AG04449 (cell line): ENCODE measurements at regions of chr3 and their contacts with region 1.

Region 1: DNA sequence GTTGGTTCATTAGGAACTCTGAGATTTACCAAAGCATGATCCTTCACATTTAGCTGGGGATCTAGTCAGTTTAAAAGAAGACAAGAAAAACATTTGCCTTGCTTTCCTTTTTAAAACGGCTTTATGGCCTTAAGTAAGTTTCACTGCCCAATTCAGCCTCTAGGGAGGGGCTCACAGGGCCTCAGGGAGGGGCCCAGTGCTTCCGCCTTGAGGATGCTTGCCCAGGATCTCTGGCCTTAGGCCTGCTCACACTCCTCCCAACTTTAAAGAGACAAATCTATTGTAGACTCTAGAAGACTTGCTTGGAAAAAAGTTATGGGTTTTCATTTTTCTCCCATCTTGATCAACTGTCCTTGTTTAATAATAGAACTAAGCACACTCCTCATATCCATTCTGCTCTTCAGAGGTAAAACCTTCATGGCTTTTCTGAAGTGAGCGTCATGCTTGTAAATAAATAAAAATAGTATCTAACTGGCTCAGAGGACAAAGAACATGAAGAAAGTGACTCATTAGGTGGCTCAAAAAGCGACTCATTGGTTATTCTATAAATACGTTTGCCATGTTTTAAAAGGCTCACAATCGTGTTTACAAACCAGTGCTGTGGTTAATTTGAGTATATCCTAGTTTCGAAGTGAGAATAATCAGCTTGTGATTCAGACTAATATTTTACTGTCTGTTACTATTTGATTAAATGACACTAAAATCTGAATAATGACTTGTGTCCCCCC is 13.7 kb downstream of the PDHB start:
- DNase-seq: no peak
- H3K4me3 ChIP-seq: no peak overlapping the region
- CTCF ChIP-seq: no peak

Region 2: GRCh38 chr3:57951066-57951882 is 468.7 kb before region 1 on chr3:
- CTCF ChIA-PET with region 1: no interaction called
- POLR2A ChIA-PET with region 1: no interaction called
- DNase-seq: no peak
- H3K4me3 ChIP-seq: no peak overlapping the region
- CTCF ChIP-seq: no peak

Region 3: GRCh38 chr3:58317811-58318210 is 102.1 kb before region 1 on chr3:
- CTCF ChIA-PET with region 1: interaction called, 155 read pairs
- POLR2A ChIA-PET with region 1: interaction called, 3 read pairs
- DNase-seq: no peak
- H3K4me3 ChIP-seq: no peak overlapping the region
- CTCF ChIP-seq: no peak